Activated naive CD4-positive, alpha-beta T cell treated with anti-CD3 and anti-CD28 coated beads for 36 hours (primary cell): ENCODE measurements at regions of chr1 and their contacts with region 1.

Region 1: GRCh38 chr1:237799762-237800474 is 90.8 kb downstream of the ZP4 start:
- DNase-seq: peak; percentile 42
- H3K4me3 Mint-ChIP-seq: no peak overlapping the region
- H3K27ac Mint-ChIP-seq: no peak overlapping the region
- H3K4me1 Mint-ChIP-seq: no peaks in the 10 kb centered on the region
- H3K27me3 Mint-ChIP-seq: peaks cover 3% of the 10 kb centered on the region

Region 2: GRCh38 chr1:237736372-237737029 is 63.4 kb before region 1 on chr1:
- CTCF ChIA-PET with region 1: no interaction called
- intact Hi-C with region 1: no loop called
- DNase-seq: no peak
- H3K4me3 Mint-ChIP-seq: no peak overlapping the region
- H3K27ac Mint-ChIP-seq: no peak overlapping the region
- H3K4me1 Mint-ChIP-seq: no peaks in the 10 kb centered on the region
- H3K27me3 Mint-ChIP-seq: no peaks in the 10 kb centered on the region

Region 3: GRCh38 chr1:237911911-237912310 is 112.0 kb after region 1 on chr1:
- CTCF ChIA-PET with region 1: no interaction called
- intact Hi-C with region 1: no loop called
- DNase-seq: no peak
- H3K4me3 Mint-ChIP-seq: no peak overlapping the region
- H3K27ac Mint-ChIP-seq: no peak overlapping the region
- H3K4me1 Mint-ChIP-seq: no peaks in the 10 kb centered on the region
- H3K27me3 Mint-ChIP-seq: no peaks in the 10 kb centered on the region

Region 4: DNA sequence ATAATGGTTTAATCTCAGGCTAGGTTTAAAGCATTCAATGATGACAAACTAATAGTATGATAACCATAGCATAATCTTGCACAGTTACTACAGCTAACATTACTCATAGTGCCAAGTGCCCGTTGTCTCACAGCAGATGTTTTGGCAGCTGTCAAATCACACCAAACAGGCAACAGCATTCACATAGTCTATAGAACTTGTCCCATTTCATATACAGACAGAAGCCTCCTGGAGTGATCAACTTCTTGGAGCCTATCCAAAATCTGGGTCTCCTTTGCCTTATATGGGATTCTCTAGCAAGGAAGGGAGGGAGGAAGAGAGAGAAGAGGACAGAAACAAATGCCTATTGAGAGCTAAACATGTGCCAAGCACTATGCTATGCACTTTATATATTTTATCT is 341.4 kb after region 1 on chr1:
- CTCF ChIA-PET with region 1: no interaction called
- intact Hi-C with region 1: loop called (anchors 10 kb)
- DNase-seq: no peak
- H3K4me3 Mint-ChIP-seq: no peak overlapping the region
- H3K27ac Mint-ChIP-seq: no peak overlapping the region
- H3K4me1 Mint-ChIP-seq: no peaks in the 10 kb centered on the region
- H3K27me3 Mint-ChIP-seq: no peaks in the 10 kb centered on the region